ENCODE measurements at regions of chr12 and their contacts with region 1.

Region 1: GRCh38 chr12:25958428-25959070 is at the start of gene RASSF8:
- DNase-seq: no peak
- H3K4me3 ChIP-seq: peak within 1 kb of the TSS; percentile 76 to 91 (median 86)
- H3K27ac ChIP-seq: peak within 1 kb of the TSS; percentile 94 to 97 (median 96)
- H3K4me1 ChIP-seq: peaks cover 28 to 48% (median 42%) of the 10 kb centered on the region in 4 donors
- H3K27me3 ChIP-seq: no peaks in the 10 kb centered on the region
- CTCF ChIP-seq: no peak
- EP300 ChIP-seq: no peak
- POLR2A ChIP-seq: no peak
- total RNA-seq, gene RASSF8: 56.8 to 81.0 (median 77.3) TPM

Region 2: DNA sequence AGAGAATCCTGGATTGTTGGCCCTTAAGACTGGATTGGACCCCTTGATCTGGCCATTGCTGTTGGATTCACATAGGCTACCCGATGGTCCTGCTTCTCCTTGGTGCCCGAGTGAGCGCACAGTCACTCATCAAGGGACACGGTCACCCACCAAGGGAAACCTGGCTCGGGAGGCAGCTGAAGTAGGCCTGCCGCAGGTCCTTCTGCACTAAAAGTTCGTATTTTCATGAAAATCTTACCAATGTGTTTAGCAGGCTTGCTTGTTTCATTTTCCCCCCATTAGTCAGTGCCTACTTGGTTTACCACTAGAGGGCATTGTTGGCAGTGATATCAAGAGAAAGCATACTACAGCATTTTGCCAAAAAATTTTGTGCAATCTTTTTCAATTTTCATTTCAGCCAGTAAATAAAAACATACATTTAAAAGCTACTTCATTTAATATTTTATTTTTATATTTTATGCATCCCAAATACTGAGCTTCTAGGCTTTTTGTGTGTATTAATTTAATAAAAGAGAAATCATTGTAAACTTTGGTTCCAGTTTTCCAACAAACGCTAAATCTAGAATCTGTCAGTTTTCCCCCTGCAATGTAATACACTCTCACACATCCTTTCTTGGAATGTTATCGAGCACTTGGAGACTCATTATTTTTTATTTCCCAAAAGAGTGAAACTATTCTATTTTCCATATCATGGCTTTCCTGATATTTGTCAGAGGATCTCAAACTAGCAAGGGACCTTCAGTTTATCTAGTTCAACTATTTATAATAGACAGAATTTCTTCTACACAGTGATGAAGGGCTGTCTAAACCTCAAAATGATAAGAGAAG is 522.1 kb before region 1 on chr12:
- intact Hi-C with region 1: loop called (anchors 5 kb)
- DNase-seq: no peak
- H3K4me3 ChIP-seq: peak overlapping the region; percentile 29 to 50 (median 36)
- H3K27ac ChIP-seq: peak overlapping the region in 2 of 4 donors; percentile 26 to 29
- H3K4me1 ChIP-seq: peaks cover 5 to 34% (median 28%) of the 10 kb centered on the region in 4 donors
- H3K27me3 ChIP-seq: no peaks in the 10 kb centered on the region
- CTCF ChIP-seq: peak; percentile 70 to 86 (median 86)
- EP300 ChIP-seq: no peak
- POLR2A ChIP-seq: no peak

Region 3: DNA sequence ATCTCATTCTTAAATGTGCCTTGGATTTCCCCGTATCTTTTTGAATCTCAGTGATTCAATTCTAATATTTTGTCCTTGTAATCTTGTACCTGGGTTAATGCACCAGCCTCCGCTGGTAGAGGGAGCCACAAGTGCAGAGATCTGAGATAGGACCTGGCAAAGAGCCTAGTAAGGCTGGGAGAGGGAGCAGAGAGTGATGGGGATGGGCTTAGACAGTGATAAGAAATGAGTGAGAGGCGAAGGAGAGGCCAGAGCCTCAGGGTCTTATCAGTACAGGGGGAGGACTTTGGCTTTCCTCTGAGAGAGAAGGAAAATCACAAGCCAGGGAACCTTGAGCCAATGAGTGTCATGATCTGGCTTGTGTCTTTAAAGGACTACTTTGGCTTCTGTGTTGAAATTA is 375.0 kb before region 1 on chr12:
- intact Hi-C with region 1: loop called (anchors 10 kb)
- DNase-seq: no peak
- H3K4me3 ChIP-seq: no peak overlapping the region
- H3K27ac ChIP-seq: peak overlapping the region in 1 of 4 donors; percentile 9
- H3K4me1 ChIP-seq: peaks cover 4 to 29% (median 19%) of the 10 kb centered on the region in 4 donors
- H3K27me3 ChIP-seq: no peaks in the 10 kb centered on the region
- CTCF ChIP-seq: peak in 1 of 3 experiments; percentile 9
- EP300 ChIP-seq: no peak
- POLR2A ChIP-seq: no peak

Region 4: GRCh38 chr12:26017484-26018206 is 59.1 kb after region 1 on chr12:
- intact Hi-C with region 1: loop called (anchors 5 kb)
- DNase-seq: no peak
- H3K4me3 ChIP-seq: no peak overlapping the region
- H3K27ac ChIP-seq: peak overlapping the region in 1 of 4 donors; percentile 8
- H3K4me1 ChIP-seq: peaks cover 8 to 42% (median 27%) of the 10 kb centered on the region in 4 donors
- H3K27me3 ChIP-seq: no peaks in the 10 kb centered on the region
- CTCF ChIP-seq: peak; percentile 48 to 69 (median 48)
- EP300 ChIP-seq: no peak
- POLR2A ChIP-seq: no peak

Region 5: GRCh38 chr12:26028953-26029735 is 70.6 kb after region 1 on chr12:
- intact Hi-C with region 1: loop called (anchors 5 kb)
- DNase-seq: no peak
- H3K4me3 ChIP-seq: no peak overlapping the region
- H3K27ac ChIP-seq: peak overlapping the region in 2 of 4 donors; percentile 3 to 54
- H3K4me1 ChIP-seq: peaks cover 9 to 59% (median 54%) of the 10 kb centered on the region in 4 donors
- H3K27me3 ChIP-seq: no peaks in the 10 kb centered on the region
- CTCF ChIP-seq: peak; percentile 77 to 91 (median 89)
- EP300 ChIP-seq: no peak
- POLR2A ChIP-seq: no peak

Region 6: GRCh38 chr12:26113853-26114719 is 155.5 kb after region 1 on chr12:
- intact Hi-C with region 1: loop called (anchors 5 kb)
- DNase-seq: peak; percentile 98
- H3K4me3 ChIP-seq: peak overlapping the region; percentile 54 to 65 (median 58)
- H3K27ac ChIP-seq: peak overlapping the region; percentile 89 to 97 (median 94)
- H3K4me1 ChIP-seq: peaks cover 27 to 62% (median 57%) of the 10 kb centered on the region in 4 donors
- H3K27me3 ChIP-seq: no peaks in the 10 kb centered on the region
- CTCF ChIP-seq: peak in 2 of 3 experiments; percentile 23 to 41
- EP300 ChIP-seq: no peak
- POLR2A ChIP-seq: peak; percentile 31

Region 7: GRCh38 chr12:26551385-26551784 is 592.8 kb after region 1 on chr12:
- intact Hi-C with region 1: no loop called
- DNase-seq: no peak
- H3K4me3 ChIP-seq: no peak overlapping the region
- H3K27ac ChIP-seq: no peak overlapping the region
- H3K4me1 ChIP-seq: no peaks in the 10 kb centered on the region
- H3K27me3 ChIP-seq: no peaks in the 10 kb centered on the region
- CTCF ChIP-seq: no peak
- EP300 ChIP-seq: no peak
- POLR2A ChIP-seq: no peak

Measured in esophagus muscularis mucosa (tissue), 4 donors.